ENCODE measurements at regions of chr10 and their contacts with region 1.

Region 1: DNA sequence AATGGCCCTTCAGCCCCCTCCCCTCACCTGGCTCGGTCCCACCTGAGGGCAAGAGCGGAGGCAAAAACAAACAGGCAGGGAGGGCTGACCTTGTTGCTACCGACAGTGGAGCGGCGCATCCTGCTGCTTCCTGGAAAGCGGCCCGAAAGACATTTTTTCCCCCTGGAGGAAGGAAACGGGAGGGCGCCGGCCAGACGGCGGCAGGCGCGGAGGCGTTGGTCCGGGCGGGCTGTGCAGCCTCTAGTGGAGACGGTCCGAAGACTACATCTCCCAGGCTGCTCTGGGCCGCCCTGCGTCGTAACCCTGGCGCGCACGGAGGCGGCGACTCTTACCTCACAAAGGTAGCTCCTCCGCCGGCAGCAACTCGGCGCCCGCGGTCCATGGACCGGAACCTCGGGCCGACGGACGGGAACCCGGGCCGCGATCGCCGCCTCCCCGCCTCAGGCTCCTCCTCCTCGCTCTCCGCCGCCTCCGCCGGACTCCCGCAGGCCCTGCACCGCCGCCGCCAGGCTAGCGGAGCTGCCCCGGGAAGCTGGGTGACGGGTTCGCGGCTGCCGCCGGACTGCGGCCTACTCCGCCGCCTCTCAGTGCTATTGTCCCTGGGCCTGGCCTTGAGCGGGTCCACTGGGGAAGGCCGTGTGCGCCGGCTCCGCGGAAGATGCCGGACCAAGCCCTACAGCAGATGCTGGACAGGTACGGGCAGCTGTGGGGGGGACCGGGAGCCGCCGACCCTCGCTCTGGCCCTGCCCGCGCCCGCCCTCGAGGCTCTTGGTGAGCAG is at the starts of genes CPEB3 and MARCHF5:
- DNase-seq: peak; percentile 87 to 99 (median 96)

Region 2: DNA sequence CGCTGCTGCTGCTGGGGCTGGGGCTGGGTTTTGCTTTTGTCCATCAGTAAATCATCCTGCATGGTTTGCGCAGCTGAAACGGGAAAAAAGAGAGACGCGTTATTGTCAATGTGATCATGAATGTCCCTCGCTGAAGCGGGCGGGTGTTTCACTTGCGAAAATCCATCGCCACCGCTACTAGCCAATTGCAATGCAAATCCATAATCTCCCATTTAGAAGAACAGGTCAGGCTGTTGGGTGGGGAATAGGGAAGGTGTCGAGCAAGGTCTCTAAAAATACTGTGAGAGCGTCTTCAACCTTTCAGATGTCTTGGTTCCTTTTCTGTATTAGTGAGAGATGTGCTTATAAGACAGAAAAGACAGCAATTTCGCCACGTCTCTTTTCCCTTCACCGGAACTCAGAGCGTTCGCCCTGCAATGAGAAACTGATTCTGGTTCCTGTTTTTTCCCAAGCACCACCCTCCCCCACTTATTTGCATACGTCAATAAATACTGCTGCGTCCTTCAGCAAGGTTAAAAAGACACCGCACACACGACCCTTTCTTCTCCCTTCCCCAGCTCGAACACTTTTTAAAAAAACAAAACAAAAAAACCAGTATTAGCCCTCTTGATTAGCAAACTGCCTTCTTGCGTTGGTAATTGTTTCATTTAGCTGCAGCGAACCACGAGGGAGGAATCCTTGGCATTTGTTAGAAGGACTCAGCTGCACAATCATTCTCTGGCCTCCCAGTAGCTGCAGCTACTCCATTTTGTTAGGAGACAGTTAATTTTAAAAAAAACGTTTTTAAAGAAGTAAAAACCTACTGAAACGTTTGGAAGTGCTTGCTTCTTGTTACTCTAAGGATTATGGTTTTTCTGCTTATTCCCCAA is 50.5 kb before region 1 on chr10:
- intact Hi-C with region 1: loop called (anchors 1 kb)
- DNase-seq: peak; percentile 32 to 91 (median 62)